ENCODE measurements at regions of chr13 and their contacts with region 1.

Region 1: GRCh38 chr13:80196756-80197155 is 144.2 kb downstream of the SPRY2 start:
- DNase-seq: no peak
- CTCF ChIP-seq: no peak

Region 2: DNA sequence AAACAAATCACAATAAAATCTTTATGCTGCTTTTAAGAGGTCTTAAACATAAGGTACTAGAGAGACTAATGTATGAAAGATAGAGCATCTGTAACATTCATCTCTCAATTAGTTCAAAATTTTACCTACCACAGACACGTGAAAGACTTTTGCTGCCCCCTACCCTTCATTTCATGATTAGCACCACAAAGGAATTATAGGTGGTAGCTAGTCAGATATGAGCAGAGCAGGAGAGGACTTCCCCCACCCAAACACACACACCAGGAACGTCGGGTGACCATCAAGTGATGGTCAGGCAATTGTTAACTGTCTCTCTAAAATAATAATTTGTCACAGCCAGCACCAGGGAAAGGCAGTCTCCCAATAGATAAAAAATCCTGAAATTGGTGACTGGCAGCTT is 1675.8 kb after region 1 on chr13:
- in situ Hi-C with region 1: loop called (anchors 25 kb)
- DNase-seq: peak; percentile 5
- CTCF ChIP-seq: peak; percentile 40